GM13976 (cell line): ENCODE measurements at regions of chrX and their contacts with region 1.

Region 1: DNA sequence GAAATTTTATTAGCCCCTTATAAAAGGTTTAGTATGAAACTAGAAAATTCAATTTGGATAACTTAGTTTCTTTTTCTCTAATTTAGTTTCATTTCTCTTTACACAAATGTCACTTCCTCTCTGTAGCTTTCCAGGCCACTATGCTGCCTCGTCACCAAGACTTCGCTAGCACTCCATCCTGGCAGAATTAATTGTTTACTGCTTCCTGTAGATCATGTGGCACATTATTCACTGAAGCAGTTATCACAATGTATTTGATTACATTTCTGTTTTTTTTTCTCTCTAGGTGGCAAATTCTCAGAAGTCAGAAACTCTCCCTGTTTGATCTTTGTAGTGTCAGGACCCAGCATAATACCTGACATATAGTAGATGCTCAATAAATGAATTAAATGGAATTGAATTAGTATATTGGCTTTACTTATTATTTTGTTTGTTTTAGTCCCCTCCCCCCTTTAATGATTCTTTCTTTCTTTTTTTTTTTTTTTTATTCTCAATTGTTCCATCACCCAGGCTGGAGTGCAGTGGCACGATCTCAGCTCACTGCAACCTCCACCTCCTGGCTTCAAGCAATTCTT is 9.3 kb upstream of the SAT1 start:
- DNase-seq: peak; percentile 32
- CTCF ChIP-seq: no peak

Region 2: DNA sequence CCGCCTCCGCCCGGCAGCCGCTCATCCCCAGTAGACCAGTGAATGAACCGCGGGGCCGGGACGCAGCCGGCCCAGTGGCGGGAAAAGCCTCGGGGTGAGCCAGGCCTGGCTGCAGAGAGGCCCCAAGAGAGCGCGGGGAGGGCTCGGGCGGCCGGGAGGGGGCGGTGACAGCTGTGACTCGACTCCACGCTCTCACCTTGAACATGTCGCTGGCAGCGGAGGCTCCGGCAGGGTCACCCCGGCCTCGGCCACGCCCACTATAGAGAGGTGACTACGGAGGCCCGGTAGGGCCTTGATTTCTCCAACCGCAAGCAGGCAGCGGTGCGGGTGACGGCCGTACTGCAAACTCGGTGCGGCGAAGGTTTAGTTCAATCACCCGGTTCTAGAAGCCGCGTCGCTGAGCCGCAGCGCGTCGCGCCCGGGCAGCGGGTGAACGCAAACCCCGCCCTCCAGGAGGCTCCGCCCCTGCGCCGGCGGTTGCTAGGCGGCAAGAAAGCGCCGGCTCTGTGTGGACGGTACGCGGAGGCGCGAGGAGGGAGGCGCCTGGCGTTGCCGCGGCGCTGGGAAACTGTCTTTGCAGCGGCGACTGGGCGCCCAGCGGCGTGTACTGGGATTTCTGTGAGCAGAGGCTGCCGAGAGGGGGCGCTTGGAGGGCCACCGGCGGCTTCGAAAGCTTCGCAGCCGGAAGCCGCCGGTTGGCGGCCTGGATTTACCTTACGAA is 134.0 kb after region 1 on chrX and contains the starts of genes APOO and CXorf58:
- in situ Hi-C with region 1: loop called (anchors 10 kb)
- DNase-seq: peak; percentile 91
- CTCF ChIP-seq: peak; percentile 63